Endothelial cell of umbilical vein (primary cell): ENCODE measurements at regions of chr6 and their contacts with region 1.

Region 1: GRCh38 chr6:100099189-100100074 is 105.4 kb upstream of the MCHR2 start:
- DNase-seq: peak; percentile 44
- H3K4me3 ChIP-seq: no peak overlapping the region
- H3K27ac ChIP-seq: no peak overlapping the region
- H3K4me1 ChIP-seq: no peaks in the 10 kb centered on the region
- H3K27me3 ChIP-seq: peaks cover 8 to 34% of the 10 kb centered on the region in 2 experiments
- CTCF ChIP-seq: peak; percentile 26 to 27
- POLR2A ChIP-seq: no peak

Region 2: DNA sequence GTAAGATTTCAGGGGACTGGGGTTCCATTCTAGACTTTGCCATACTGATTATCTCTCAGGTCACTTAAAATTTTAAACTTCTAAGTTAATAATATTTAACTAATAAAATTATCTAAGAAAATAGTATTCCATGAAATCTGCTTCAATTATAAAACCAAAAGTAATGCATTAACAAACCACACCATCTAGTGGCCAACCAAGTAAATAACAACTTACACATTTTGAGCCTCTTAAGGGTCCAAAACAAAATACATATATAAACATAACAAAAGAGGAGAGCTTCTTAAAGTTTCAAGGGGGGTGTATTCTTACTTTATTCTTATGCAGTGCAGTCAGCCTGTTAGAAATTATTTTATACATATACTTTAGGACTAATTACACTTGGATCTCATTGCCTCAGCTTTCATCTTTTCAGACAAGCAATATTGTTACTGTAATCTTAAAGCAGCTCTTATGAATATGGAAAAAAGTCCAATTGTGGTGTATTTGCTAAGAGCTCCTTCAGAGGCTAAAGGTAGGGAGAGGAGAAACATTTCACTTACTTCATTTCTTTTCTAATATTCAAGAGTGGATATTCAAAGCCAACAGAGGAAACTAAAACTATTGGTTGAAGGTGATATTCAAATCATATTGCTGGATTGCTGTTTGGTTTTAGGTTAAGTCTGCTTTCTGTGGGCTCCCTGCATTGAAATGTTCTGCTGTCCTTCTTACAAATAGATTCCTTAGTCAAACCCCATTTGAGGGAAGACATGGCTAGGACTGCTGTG is 565.0 kb after region 1 on chr6:
- CTCF ChIA-PET with region 1: interaction called, 13 read pairs
- POLR2A ChIA-PET with region 1: no interaction called
- dilution Hi-C with region 1: no loop called
- intact Hi-C with region 1: no loop called
- DNase-seq: peak; percentile 40
- H3K4me3 ChIP-seq: no peak overlapping the region
- H3K27ac ChIP-seq: no peak overlapping the region
- H3K4me1 ChIP-seq: peaks cover 4% of the 10 kb centered on the region
- H3K27me3 ChIP-seq: no peaks in the 10 kb centered on the region
- CTCF ChIP-seq: peak; percentile 26 to 32
- POLR2A ChIP-seq: no peak